ENCODE measurements at regions of chr3 and their contacts with region 1.

Region 1: DNA sequence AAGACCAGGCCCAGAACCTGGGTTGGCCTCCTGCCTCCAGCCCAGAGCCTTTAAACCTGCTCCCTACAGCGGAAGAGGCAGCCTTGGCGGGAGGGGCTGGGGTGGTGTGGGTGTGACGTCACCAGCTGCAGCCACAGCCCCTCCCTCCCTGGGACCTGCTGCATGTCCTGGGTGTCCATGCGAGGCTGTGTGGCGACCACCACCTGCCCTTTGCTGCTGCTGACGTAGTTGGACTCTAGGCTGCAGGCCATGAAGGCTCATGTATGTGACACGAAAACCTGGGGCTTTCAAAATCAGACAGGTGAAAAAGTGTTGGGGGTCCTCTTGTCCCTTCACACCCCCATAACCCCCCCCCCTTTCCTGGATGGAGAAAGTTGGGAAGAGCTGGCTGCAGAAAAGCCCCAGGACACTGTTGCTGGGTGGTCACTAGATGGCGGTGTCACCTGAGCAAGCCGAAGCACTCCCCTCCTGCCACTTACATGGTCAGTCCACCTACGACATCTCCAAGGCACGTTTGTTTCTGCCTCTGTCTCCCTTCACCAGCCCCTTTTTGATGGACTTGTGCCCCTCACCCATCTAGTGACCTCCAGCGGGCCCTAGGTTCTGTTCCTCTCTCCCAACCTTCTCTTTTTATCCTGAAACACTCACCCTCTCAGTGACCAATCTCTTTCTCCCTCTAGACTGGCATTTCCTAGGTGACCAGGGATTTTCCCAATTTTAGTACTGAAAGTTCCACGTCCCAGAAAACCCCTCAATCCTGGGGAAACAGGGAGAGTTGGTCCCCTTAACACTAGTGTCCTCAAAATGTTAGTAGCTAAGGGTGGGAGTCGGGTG is 35.2 kb downstream of the SLC6A20 start:
- DNase-seq: peak; percentile 3
- H3K4me3 ChIP-seq: no peak overlapping the region
- CTCF ChIP-seq: peak; percentile 90

Region 2: DNA sequence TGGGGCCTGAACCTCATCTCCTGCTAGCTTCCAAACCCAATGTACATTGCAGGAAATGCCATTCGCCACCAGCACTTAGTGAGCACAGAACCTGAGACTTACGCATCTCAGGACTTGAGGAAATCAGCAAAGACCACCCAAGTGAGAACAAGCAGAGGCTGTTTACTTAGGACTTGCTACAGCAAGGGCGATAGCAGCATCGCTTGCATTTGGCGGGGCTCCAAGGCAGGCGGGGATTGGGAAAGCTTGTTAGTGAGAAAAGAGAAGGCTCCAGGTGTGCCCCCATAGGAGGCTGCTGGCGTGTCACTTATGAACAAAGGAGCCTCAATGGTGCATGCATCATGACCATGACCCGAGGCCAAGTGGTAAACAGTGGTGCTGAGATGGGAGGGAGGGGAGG is 15.5 kb after region 1 on chr3:
- CTCF ChIA-PET with region 1: interaction called, 22 read pairs
- POLR2A ChIA-PET with region 1: no interaction called
- DNase-seq: no peak
- H3K4me3 ChIP-seq: no peak overlapping the region
- CTCF ChIP-seq: no peak

Region 3: DNA sequence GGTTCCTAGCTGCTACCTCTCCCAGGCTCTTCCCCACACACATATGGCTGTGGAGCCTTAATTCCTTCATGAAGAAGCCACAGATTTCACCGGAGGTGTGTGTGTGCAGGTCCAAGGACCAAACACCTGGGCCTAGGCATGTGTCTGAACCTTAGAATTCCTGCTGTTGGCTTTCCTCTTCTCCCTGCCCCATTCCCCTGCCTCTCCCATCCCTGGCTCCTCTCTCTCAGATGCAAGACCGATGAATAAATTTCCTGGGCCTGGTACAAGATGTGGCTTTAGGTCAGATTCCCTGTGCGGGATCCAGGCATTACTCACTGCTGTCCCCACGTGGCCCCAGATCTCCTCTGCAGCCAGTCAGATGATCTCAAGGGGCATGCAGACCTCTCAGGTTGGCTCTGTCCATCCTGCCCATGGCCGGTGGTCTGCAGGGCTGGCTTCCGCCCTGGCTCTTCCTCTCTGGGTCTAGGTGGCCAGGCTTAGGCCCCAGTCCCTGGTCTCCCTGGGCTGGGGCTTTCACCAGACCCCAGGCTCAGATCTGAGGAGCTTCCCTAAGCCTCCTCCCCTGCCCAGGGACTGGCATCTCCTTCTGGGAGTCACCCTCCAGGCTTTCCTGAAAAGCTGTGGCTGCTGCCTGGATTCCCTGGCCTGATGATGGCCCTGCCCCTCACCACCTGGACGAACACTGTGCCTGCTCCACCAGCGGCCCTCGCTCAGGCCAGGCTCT is 145.7 kb after region 1 on chr3:
- CTCF ChIA-PET with region 1: interaction called, 57 read pairs
- POLR2A ChIA-PET with region 1: no interaction called
- DNase-seq: peak; percentile 28
- H3K4me3 ChIP-seq: no peak overlapping the region
- CTCF ChIP-seq: peak; percentile 75

Region 4: GRCh38 chr3:45929042-45929679 is 168.1 kb after region 1 on chr3:
- CTCF ChIA-PET with region 1: interaction called, 139 read pairs
- POLR2A ChIA-PET with region 1: no interaction called
- DNase-seq: no peak
- H3K4me3 ChIP-seq: no peak overlapping the region
- CTCF ChIP-seq: peak; percentile 91